Activated CD8-positive, alpha-beta T cell treated with anti-CD3 and anti-CD28 coated beads for 36 hours (primary cell): ENCODE measurements at regions of chr19 and their contacts with region 1.

Region 1: DNA sequence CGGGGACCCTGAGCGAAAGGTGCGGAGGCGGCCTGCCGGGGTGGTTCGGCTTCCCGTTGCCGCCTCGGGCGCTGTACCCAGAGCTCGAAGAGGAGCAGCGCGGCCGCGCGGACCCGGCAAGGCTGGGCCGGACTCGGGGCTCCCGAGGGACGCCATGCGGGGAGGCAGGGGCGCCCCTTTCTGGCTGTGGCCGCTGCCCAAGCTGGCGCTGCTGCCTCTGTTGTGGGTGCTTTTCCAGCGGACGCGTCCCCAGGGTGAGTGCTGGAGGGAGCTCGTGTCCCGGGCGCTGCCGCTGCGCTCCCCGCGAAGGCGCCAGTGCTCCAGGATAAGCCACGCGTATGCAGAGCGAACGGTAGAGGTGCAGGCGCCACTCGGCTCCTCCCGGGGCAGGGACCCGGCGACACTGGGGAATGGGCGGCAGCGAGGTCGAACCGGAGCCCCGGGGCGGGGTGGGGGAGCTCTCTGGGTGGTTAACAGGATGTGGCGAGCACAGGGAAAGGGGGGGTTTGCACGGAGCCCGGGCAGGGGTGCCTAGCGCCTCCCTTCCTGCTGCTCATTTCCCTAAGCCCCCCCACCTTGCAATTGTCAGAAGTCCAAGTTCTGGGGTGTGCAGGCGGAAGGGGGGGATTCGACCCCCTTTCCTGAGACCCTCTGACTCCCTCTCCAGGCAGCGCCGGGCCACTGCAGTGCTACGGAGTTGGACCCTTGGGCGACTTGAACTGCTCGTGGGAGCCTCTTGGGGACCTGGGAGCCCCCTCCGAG is at the start of gene IL27RA:
- DNase-seq: peak; percentile 84
- ATAC-seq: peak; percentile 78
- H3K4me3 Mint-ChIP-seq: peak within 1 kb of the TSS; percentile 94
- H3K27ac Mint-ChIP-seq: peak within 1 kb of the TSS; percentile 93
- H3K4me1 Mint-ChIP-seq: peaks cover 23% of the 10 kb centered on the region
- H3K27me3 Mint-ChIP-seq: no peaks in the 10 kb centered on the region
- CTCF ChIP-seq: peak; percentile 80
- total RNA-seq, gene IL27RA: 46.5 to 48.2 TPM

Region 2: DNA sequence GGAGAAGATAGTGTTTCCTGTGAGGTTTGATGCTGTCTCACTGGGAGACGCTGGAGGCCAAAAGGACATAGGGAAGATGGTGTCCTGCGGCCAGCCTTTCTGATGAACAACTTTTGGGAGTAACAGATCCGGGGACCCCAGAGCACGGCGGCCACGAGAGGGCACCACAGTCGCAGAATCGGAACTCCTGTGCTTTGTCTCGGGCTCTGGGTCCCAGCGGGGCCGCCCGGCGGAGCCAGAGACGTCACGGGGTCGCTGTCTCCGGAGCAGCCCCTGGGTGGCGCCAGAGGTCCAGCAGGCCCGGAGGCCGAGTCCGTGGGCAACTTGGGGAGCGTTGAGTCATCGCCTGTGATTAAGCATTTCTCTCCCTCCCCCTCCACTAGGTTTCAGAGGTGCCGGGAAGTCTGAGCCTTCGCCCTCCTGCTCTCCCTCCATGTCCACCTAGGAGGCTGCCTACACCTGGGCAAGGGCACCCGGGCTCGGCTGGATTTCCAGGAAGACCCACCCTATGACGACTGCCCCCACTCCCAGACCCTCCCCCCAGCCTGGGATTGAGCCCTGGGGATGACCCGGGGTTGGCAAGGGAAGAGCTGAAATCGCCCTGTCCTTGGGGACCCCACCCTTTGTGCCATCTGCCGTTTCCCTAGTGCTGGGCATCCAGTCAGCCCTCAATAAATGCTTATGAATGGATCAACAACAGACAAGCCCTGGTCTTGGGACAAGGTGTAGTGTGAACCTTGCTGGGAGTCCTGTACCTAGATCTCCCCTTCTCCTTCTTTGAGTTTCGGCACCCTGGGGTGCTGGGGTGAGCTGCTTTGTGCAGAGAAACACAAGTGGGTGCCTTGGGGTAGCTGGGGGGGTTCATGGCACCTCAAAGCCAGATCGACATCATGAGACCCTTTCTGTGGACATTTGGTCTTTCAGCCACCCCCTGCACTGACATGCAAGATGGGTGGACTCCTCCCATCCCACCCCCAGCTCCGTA is 151.5 kb before region 1 on chr19:
- CTCF ChIA-PET with region 1: interaction called, 13 read pairs
- POLR2A ChIA-PET with region 1: no interaction called
- intact Hi-C with region 1: loop called (anchors 10 kb)
- DNase-seq: peak; percentile 99
- ATAC-seq: peak; percentile 96
- H3K4me3 Mint-ChIP-seq: peak overlapping the region; percentile 47
- H3K27ac Mint-ChIP-seq: peak overlapping the region; percentile 75
- H3K4me1 Mint-ChIP-seq: peaks cover 34% of the 10 kb centered on the region
- H3K27me3 Mint-ChIP-seq: no peaks in the 10 kb centered on the region
- CTCF ChIP-seq: peak; percentile 99

Region 3: DNA sequence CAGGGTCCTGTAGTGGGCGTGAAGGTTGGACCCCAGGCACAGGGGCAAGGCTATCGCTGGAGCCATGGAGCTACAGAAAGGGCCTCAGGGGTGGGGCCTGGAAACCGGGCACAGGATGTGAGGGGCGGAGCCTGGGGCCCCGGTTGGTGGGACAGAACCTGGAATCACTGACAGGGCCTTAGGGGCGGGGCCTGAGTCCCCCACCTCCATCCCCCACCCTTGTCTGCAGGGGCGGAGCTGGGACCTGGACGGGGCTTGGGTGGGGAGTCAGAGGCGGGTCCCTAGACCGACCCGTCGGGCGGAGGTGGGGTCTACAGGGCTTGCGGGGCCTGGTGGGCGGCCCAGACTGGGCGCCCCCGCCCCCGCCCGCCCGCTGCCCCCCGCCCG is 53.6 kb before region 1 on chr19:
- CTCF ChIA-PET with region 1: interaction called, 3 read pairs
- POLR2A ChIA-PET with region 1: interaction called, 18 read pairs
- intact Hi-C with region 1: no loop called
- DNase-seq: peak; percentile 70
- ATAC-seq: peak; percentile 73
- H3K4me3 Mint-ChIP-seq: no peak overlapping the region
- H3K27ac Mint-ChIP-seq: peak overlapping the region; percentile 49
- H3K4me1 Mint-ChIP-seq: peaks cover 20% of the 10 kb centered on the region
- H3K27me3 Mint-ChIP-seq: no peaks in the 10 kb centered on the region
- CTCF ChIP-seq: no peak

Region 4: GRCh38 chr19:13986348-13986904 is 45.5 kb before region 1 on chr19:
- CTCF ChIA-PET with region 1: interaction called, 4 read pairs
- POLR2A ChIA-PET with region 1: interaction called, 10 read pairs
- intact Hi-C with region 1: no loop called
- DNase-seq: peak; percentile 100
- ATAC-seq: peak; percentile 93
- H3K4me3 Mint-ChIP-seq: peak overlapping the region; percentile 67
- H3K27ac Mint-ChIP-seq: peak overlapping the region; percentile 98
- H3K4me1 Mint-ChIP-seq: peaks cover 65% of the 10 kb centered on the region
- H3K27me3 Mint-ChIP-seq: no peaks in the 10 kb centered on the region
- CTCF ChIP-seq: no peak

Region 5: DNA sequence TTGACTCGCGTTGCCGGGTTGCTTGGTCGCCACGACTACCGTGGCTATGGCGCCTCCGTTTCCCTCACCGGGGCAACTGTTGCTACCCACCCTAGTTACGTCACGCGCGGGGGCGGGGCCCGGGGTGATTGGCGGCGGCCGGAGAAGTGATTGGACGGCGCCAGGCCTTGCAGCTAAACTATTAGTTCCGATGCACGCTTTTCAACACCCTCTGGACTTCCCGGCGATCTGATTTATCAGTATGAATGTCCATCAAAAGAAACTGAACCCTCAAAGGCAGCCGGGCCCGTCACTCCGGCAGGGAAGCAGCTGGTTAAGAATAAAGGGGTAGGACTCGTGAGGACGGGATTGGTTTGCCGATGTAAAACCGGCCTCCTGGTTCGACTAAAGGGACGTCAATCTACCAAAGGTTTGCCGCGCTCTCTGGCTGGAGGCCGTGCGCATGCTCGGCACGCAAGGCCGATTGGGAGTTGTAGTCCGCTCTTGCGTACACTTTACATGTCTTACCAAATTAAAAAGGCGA is 25.6 kb before region 1 on chr19 and contains the start of gene RFX1:
- CTCF ChIA-PET with region 1: interaction called, 10 read pairs
- POLR2A ChIA-PET with region 1: interaction called, 12 read pairs
- intact Hi-C with region 1: no loop called
- DNase-seq: peak; percentile 100
- ATAC-seq: peak; percentile 80
- H3K4me3 Mint-ChIP-seq: peak within 1 kb of the TSS; percentile 88
- H3K27ac Mint-ChIP-seq: peak within 1 kb of the TSS; percentile 98
- H3K4me1 Mint-ChIP-seq: peaks cover 37% of the 10 kb centered on the region
- H3K27me3 Mint-ChIP-seq: no peaks in the 10 kb centered on the region
- CTCF ChIP-seq: no peak
- total RNA-seq, gene RFX1: 13.3 to 14.1 TPM

Region 6: GRCh38 chr19:14021474-14021873 is 10.4 kb before region 1 on chr19:
- CTCF ChIA-PET with region 1: interaction called, 14 read pairs
- POLR2A ChIA-PET with region 1: interaction called, 3 read pairs
- intact Hi-C with region 1: no loop called
- DNase-seq: no peak
- ATAC-seq: peak; percentile 64
- H3K4me3 Mint-ChIP-seq: no peak overlapping the region
- H3K27ac Mint-ChIP-seq: no peak overlapping the region
- H3K4me1 Mint-ChIP-seq: peaks cover 8% of the 10 kb centered on the region
- H3K27me3 Mint-ChIP-seq: no peaks in the 10 kb centered on the region
- CTCF ChIP-seq: no peak

Region 7: DNA sequence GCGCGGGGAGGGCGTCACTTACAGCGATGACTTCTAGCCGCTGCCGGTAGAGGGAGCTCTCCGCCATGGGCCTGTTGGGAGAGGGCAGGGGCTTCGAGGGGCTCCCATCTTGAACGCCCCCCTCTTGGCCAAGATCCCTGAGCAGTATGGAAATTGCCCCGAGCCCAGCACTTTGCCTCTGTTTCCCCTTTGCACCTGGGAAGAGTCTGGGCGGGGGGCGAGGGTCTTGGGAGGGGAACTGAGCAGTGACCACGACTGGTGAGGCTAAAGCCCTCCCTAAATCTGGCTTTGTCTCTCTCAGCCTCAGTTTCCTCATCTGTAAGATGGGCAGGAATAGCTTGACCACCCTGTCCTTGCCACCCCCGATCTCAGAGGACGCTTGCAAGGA is 27.2 kb after region 1 on chr19:
- CTCF ChIA-PET with region 1: interaction called, 12 read pairs
- POLR2A ChIA-PET with region 1: interaction called, 6 read pairs
- intact Hi-C with region 1: no loop called
- DNase-seq: peak; percentile 77
- ATAC-seq: peak; percentile 77
- H3K4me3 Mint-ChIP-seq: no peak overlapping the region
- H3K27ac Mint-ChIP-seq: no peak overlapping the region
- H3K4me1 Mint-ChIP-seq: peaks cover 16% of the 10 kb centered on the region
- H3K27me3 Mint-ChIP-seq: peaks cover 37% of the 10 kb centered on the region
- CTCF ChIP-seq: peak; percentile 91